ENCODE measurements at regions of chr12 and their contacts with region 1.

Region 1: DNA sequence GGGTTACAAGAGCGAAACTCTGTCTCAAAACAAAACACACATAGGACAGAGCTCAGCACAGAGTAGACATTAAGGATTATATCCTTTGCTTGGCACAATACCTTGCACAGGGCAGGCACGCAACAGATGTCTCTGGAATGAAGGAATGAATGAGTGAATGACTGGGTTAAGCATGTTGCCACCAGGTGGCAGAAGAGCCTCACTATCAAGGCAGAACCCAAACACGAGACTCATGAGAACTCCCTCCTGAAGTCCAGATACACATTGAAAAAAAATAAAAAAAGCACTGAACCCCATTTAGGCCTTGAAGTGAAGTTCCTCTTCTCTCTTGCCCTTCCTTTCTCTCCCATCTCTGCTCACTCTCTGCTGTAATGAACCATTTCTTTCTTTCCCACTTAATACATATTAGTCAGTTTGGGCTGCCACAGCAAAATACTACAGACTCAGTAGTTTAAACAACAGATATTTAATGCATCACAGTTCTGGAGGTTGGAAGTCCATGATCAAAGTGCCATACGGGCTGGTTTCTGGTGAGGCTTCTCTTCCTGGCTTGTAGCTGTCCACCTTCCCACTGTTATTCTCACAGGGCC is 26.6 kb upstream of the LTA4H start:
- DNase-seq: peak; percentile 84

Region 2: DNA sequence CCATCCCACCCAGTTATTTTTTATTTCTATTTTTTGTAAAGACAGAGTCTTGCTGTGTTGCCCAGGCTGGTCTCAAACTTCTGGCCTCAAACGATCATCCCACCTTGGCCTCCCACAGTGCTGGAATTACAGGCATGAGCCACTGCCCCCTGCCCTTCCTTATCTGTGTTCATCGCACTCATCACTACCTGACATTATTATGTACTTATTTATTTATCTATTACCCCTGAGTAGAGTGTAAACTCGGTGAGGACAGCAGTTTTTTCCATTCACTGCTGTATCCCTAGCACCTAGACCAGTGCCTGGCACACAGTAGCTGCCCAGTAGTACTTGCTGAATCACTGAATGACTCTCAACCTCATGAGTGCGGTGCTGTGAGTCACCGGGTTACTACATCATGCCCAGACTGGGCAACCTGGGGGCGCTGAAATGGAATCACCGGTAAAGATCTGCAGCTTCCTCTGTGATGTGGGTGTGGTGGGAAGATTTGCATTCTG is 428.9 kb before region 1 on chr12:
- intact Hi-C with region 1: no loop called
- DNase-seq: no peak

Region 3: GRCh38 chr12:96219698-96220206 is 157.8 kb after region 1 on chr12:
- intact Hi-C with region 1: loop called (anchors 2 to 5 kb)
- DNase-seq: no peak

Region 4: DNA sequence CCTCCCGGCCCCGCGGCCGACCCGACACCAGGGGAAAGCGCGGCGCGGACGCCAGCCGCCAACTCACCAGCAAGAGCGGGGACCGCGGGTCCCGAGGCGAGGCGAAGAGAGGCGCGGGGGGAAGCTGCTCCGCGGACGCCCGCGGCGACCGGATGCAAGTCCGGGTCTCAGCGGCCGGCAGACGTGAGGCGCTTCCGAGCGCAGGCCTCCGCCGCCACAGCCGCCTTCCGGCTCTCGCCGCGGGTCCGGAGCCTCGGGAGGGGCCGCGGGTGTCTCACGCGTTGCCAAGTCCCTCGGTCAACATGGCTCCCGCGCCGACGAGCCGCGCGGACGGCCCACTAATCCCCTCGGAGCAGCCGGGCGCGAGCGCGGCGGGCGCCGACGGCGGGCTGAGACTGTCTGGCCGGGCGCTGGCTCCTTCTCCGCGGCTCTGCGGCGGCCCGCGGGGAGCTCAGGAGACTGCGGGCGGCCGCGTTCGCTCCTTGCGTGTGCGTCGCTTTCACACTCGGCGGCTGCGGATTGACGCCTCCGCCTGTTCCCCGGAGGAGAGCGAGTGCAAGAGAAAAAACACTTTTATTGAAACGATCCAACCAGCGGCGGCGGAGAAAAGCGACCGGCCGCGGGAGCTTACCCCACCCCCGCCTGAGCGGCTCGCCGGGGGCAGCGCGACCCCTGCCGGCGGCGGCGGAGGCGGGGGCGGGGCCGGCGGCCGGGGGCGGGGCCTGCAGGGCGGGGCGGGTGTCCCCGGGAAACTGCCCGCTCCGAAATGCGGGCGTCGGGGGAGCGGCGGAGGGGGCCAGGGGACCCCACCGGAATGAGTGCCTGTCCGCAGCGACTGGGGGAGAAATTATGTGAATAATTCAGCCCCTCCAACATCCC is 338.2 kb after region 1 on chr12 and contains the start of gene CDK17:
- intact Hi-C with region 1: loop called in 1 of 2 experiments (anchors 10 kb)
- DNase-seq: peak; percentile 95
- total RNA-seq, gene CDK17: 46.4 to 50.1 TPM

Region 5: DNA sequence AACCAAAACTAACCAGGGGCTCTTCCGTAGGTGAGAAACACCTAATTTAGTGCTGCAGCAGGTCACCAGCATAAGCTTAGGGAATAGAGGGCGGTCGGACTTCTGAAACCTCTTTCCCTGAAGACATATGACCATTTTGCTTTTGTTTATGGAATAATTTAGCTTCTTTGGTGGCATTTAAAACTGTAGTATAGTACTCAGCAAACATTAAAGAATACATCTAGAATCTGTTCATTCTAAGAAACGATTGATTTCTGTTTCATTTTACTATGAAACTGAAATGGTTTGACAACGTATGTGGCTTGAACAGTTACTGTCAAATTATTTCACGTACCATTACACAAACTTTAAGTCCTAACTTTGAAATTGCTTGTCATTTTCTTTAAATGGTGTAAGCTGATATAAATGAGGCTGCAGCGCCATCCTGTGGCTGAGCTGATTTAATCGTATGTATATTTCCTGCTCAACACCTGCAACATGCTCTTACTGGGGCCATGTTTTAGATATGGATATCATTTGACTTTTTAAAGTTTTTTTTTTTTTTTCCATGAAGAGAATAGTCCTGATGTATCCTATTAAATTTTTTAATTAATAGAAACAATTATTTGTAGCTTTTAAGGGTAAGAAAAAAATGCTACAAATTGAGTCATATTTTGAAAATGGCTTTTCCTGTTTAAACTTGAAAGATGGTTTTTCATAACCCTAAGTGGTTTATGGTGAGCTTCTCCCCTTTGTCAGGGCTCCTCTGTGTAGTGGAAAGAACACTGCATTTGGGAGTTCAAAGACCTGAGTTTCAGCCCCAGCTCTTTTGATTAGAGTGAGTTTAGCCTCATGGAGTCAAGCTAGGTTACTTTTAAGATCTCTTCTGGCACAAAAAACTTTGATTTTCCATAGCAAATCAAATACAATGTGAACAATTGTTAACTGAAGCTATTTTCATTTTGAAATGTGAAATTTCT is 454.8 kb after region 1 on chr12:
- intact Hi-C with region 1: loop called (anchors 5 to 10 kb)
- DNase-seq: peak; percentile 92

Region 6: DNA sequence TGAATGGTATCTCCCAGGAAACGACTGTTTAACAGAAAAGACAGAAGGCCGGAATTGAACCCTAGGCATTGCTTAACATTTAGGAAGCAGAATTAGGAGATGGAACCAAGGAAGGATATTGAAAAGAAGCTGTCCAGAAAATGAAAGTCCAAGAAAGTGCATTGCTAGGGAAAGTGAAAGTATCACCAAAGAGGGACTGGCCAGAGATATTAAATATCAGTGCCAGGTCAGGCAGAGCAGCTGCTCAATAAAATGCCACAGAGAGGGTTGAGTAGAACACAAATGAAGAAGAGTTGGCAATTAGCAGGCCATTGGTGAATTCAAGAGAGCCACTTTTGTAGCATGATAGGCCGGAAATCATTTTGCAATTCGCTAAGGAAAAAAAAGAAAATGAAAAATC is 529.0 kb after region 1 on chr12:
- intact Hi-C with region 1: no loop called
- DNase-seq: no peak

Measured in posterior vena cava (tissue), 2 donors.